Esophagus muscularis mucosa (tissue), 4 donors: ENCODE measurements at regions of chr1 and their contacts with region 1.

Region 1: DNA sequence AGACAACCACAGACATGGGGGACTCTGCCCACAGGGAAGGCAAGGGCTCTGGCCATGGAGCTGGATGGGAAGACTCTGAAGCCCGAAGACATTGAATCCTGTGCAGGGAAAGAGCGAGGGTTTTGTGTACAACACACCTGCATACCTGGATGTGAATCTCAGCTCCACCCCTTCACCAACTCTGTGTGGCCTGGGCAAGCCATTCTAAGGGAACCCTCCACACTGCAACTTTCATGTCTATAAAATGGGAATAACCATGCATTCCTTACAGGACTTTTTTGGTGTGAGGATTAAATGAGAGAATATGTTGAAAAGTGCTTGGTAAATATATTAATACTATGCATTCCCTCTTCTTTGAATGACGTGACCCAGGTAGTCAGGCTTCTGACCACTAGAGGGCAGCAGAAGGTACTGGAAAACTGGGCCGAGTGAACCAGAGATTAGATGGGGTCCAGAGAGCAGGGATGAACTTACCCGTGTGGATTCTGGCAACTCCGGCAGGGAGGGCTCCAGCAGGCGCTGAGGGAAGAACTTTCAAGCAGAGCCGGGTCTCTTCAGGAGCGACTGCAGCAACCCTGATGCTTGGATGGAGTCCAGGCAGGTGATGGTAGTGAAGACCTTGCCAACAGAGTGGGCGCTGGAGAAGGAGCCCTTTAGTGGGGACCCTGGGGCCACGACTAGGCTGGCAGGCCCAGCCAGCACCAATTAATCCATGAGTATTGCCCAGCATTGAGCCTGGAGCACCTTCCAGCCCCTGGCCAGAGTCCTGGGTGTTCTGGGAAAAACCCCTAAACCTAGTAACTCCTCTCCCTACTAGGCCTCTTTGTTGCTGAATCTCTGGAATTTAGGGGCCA is 834 bp upstream of the ELF3 start:
- DNase-seq: no peak
- H3K4me3 ChIP-seq: no peak overlapping the region
- H3K27ac ChIP-seq: no peak overlapping the region
- H3K4me1 ChIP-seq: peaks cover 0 to 12% (median 2%) of the 10 kb centered on the region in 4 donors
- H3K27me3 ChIP-seq: no peaks in the 10 kb centered on the region
- CTCF ChIP-seq: peak; percentile 76 to 87 (median 77)
- EP300 ChIP-seq: no peak
- POLR2A ChIP-seq: no peak

Region 2: GRCh38 chr1:201842472-201843027 is 167.0 kb before region 1 on chr1:
- intact Hi-C with region 1: no loop called
- DNase-seq: no peak
- H3K4me3 ChIP-seq: no peak overlapping the region
- H3K27ac ChIP-seq: no peak overlapping the region
- H3K4me1 ChIP-seq: peaks cover 0 to 6% (median 3%) of the 10 kb centered on the region in 4 donors
- H3K27me3 ChIP-seq: no peaks in the 10 kb centered on the region
- CTCF ChIP-seq: no peak
- EP300 ChIP-seq: no peak
- POLR2A ChIP-seq: no peak

Region 3: DNA sequence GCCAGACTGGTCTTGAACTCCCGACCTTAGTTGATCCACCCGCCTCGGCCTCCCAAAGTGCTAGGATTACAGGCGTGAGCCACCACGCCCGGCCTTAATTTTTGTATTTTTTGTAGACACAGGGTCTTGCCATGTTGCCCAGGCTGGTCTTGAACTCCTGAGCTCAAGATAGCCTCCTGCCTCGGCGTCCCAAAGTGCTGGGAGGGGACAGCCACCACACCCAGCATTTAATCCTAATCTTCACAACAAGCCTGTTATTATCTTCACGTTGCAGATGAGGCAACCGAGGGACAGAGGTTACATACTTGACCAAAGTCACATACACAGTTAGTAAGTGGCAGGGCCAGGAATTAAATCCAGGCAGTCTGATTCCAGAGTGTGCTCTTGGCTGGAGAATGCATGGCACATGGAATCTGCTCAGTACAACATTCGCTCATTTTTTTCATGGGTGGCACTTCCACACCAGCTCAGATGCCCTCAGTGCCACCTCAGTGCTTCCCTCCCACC is 108.4 kb after region 1 on chr1:
- intact Hi-C with region 1: loop called (anchors 5 kb)
- DNase-seq: no peak
- H3K4me3 ChIP-seq: no peak overlapping the region
- H3K27ac ChIP-seq: no peak overlapping the region
- H3K4me1 ChIP-seq: peaks cover 16 to 26% (median 23%) of the 10 kb centered on the region in 4 donors
- H3K27me3 ChIP-seq: no peaks in the 10 kb centered on the region
- CTCF ChIP-seq: no peak
- EP300 ChIP-seq: no peak
- POLR2A ChIP-seq: no peak

Region 4: DNA sequence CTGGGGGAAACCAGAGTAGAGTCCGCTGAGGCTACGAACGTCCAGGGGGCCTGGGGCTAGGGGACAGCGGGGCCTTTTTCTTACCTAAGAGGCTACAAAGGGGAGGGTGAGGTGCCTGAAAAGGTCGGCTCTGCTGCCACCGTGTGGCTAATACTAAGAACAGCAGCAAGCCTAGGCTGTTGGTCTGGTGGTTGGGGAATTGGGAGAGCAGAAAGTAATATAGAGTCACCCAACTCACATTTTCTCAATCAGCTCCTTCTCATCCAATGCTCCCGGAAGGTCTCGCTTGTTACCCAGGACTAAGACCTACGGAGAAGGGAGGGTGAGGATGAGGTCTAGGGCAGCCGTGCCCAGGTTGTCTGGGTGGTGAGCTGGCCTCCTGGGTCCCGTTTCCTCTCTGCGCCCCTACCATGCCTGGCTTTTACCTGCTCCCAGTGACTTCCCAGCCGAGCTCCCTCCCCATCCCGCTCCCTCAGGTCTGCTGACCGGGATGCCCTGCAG is 125.7 kb after region 1 on chr1:
- intact Hi-C with region 1: loop called (anchors 1 kb)
- DNase-seq: no peak
- H3K4me3 ChIP-seq: no peak overlapping the region
- H3K27ac ChIP-seq: peak overlapping the region; percentile 88 to 90 (median 89)
- H3K4me1 ChIP-seq: peaks cover 26 to 84% (median 70%) of the 10 kb centered on the region in 4 donors
- H3K27me3 ChIP-seq: no peaks in the 10 kb centered on the region
- CTCF ChIP-seq: peak; percentile 89 to 95 (median 91)
- EP300 ChIP-seq: no peak
- POLR2A ChIP-seq: no peak